ENCODE measurements at regions of chr6 and their contacts with region 1.

Region 1: GRCh38 chr6:37648465-37649330 is 49.0 kb downstream of the MDGA1 start:
- DNase-seq: peak in 1 of 2 donors; percentile 39
- ATAC-seq: peak in 6 of 8 donors; percentile 31 to 66 (median 52)
- H3K4me3 ChIP-seq: peak overlapping the region in 8 of 10 donors; percentile 7 to 34 (median 22)
- H3K27ac ChIP-seq: no peak overlapping the region
- H3K4me1 ChIP-seq: peaks cover 0 to 32% (median 22%) of the 10 kb centered on the region in 9 donors
- H3K27me3 ChIP-seq: peaks cover 0 to 31% (median 19%) of the 10 kb centered on the region in 7 donors
- CTCF ChIP-seq: no peak

Region 2: GRCh38 chr6:37239950-37240713 is 408.6 kb before region 1 on chr6:
- intact Hi-C with region 1: no loop called
- DNase-seq: peak; percentile 85 to 97
- ATAC-seq: peak; percentile 43 to 82 (median 76)
- H3K4me3 ChIP-seq: no peak overlapping the region
- H3K27ac ChIP-seq: peak overlapping the region; percentile 32 to 92 (median 77)
- H3K4me1 ChIP-seq: peaks cover 3 to 70% (median 39%) of the 10 kb centered on the region in 9 donors
- H3K27me3 ChIP-seq: no peaks in the 10 kb centered on the region
- CTCF ChIP-seq: no peak

Region 3: DNA sequence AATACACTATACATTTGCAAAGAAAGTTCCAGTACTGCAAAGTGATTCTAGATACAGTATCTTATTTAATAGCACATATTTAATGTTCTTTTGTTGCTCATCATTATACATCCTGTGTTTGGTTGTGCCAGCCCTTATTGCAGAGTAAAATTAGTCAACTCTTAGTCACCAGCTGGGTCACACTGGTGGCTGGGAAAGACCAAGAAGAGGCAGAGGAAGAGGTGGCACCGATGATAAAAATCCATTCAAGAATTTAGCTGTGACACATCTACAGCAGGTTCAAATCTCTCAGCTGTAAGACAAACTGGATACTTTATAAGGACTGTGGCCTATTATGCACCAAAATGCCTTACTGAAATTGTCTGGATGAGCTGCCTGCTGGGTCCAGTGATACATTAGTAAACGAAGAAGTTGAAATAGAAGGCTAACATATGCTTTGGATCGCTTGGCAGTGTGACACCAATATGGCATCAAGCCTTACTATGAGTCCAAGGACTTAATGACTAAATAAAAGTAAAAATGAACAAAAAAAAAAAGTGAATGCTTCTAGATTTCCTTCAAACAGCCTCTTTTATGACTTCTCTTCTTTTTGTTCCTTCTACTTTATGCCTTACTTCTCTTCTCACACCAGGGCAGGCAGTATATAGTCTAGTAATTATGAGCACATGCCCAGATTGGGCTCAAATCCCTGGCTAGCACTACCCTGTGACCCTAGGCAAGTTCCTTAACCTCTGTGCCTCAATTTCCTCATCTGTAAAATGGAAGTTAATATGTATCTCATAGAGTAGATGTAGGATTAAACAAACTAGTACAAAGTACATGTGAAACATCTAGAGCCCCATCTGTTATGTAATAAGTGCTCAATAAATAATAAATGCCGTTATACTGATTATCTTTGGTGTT is 324.3 kb before region 1 on chr6:
- intact Hi-C with region 1: no loop called
- DNase-seq: no peak
- ATAC-seq: no peak
- H3K4me3 ChIP-seq: no peak overlapping the region
- H3K27ac ChIP-seq: peak overlapping the region in 1 of 10 donors; percentile 15
- H3K4me1 ChIP-seq: peaks cover 0 to 44% (median 12%) of the 10 kb centered on the region in 9 donors
- H3K27me3 ChIP-seq: no peaks in the 10 kb centered on the region
- CTCF ChIP-seq: no peak

Region 4: DNA sequence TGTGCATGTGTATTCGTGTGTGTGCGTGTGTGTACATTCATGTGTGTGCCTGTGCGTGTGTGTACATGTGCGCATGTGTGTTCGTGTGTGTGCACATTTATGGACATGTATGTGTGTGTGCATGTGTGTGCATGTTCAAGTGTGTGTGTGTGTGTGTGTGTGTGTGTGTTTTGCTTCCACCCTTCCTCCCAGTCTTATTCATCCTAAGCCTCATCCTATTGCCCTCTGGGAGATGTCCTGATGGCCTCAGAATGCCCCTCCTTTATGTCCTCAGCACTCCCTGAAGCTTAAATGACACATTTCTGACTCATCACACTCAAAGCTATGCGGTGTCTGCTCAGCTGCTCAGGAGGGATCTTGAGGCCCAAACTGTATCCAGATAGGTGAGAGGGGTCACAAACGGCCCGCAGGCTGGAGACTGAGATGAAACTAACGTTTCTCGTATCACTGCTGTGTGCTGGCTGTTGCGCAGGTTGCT is 72.3 kb before region 1 on chr6:
- intact Hi-C with region 1: loop called in 1 of 10 experiments (anchors 5 kb)
- DNase-seq: no peak
- ATAC-seq: peak in 1 of 8 donors; percentile 17
- H3K4me3 ChIP-seq: no peak overlapping the region
- H3K27ac ChIP-seq: no peak overlapping the region
- H3K4me1 ChIP-seq: peaks cover 0 to 28% (median 12%) of the 10 kb centered on the region in 9 donors
- H3K27me3 ChIP-seq: peaks cover 0 to 15% (median 5%) of the 10 kb centered on the region in 7 donors
- CTCF ChIP-seq: no peak

Measured in heart right ventricle (tissue), 16 donors.